ENCODE measurements at regions of chr5 and their contacts with region 1.

Region 1: DNA sequence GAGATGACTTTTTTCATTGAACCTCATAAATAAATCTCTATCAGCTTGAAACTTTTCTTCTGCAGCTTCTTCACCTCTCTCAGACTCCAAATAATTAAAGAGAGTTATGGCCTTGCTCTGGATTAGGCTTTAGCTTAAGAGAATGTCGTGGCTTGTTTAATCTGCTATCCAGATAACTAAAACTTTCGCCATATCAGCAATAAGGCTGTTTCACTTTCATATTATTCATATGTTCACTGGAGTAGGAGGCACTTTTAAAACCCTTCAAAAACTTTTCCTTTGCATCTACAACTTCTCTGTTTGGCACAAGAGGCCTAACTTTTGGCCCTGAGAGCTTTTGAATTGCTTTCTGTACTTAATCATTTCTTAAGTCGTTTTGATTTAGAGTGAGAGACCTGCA is 386.9 kb upstream of the FAM174A start:
- DNase-seq: no peak
- ATAC-seq: no peak
- H3K4me3 ChIP-seq: no peak overlapping the region
- H3K27ac ChIP-seq: no peak overlapping the region
- H3K4me1 ChIP-seq: no peaks in the 10 kb centered on the region
- H3K27me3 ChIP-seq: no peaks in the 10 kb centered on the region

Region 2: GRCh38 chr5:100186181-100186580 is 37.9 kb after region 1 on chr5:
- intact Hi-C with region 1: loop called in 1 of 4 experiments (anchors 2 kb)
- DNase-seq: no peak
- ATAC-seq: no peak
- H3K4me3 ChIP-seq: no peak overlapping the region
- H3K27ac ChIP-seq: no peak overlapping the region
- H3K4me1 ChIP-seq: no peaks in the 10 kb centered on the region
- H3K27me3 ChIP-seq: no peaks in the 10 kb centered on the region

Measured in right cardiac atrium (tissue), 5 donors.